CD4-positive, alpha-beta memory T cell (primary cell): ENCODE measurements at regions of chr17 and their contacts with region 1.

Region 1: GRCh38 chr17:68291844-68292695 is 775 bp downstream of the ARSG start:
- DNase-seq: peak; percentile 96 to 98 (median 97)
- H3K4me3 ChIP-seq: peak overlapping the region; percentile 18 to 90
- H3K4me3 Mint-ChIP-seq: peak overlapping the region; percentile 74 to 87 (median 84)
- H3K27ac ChIP-seq: peak overlapping the region; percentile 90
- H3K27ac Mint-ChIP-seq: peak overlapping the region; percentile 89 to 99 (median 93)
- H3K4me1 ChIP-seq: peaks cover 78% of the 10 kb centered on the region
- H3K4me1 Mint-ChIP-seq: peaks cover 53 to 84% (median 63%) of the 10 kb centered on the region in 4 donors
- H3K27me3 ChIP-seq: no peaks in the 10 kb centered on the region
- H3K27me3 Mint-ChIP-seq: no peaks in the 10 kb centered on the region

Region 2: DNA sequence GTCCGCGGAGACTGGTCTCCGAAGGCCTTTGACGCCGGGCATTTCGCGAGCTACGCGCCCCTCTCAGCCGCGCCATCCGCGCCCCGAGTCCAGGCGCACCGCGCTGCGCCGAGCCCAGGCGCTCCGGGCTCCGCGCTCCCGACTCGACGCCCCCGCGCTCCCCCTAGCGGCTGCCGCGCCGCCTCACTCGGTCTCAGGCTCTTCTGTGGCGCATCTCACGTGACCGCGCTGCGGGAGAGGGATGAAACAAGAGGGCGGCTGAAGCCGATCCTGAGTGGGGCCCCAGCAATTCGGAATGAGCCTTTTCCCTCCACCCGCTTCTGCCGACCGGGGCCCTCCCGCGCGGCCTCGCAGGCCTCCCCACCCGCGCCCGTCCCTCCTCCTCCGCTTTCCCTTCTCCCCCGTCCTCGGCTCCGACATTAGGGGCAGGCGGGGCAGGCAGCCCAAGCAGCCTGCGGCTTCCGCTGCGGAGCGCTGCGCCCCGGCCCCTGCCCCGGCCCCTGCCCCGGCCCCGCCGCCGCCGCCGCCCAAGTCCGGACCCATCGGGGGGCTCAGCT is 86.7 kb before region 1 on chr17:
- CTCF ChIA-PET with region 1: interaction called, 3 read pairs
- POLR2A ChIA-PET with region 1: interaction called, 25 read pairs
- intact Hi-C with region 1: no loop called
- DNase-seq: peak; percentile 88 to 94 (median 89)
- H3K4me3 ChIP-seq: peak overlapping the region in 1 of 2 donors; percentile 65
- H3K4me3 Mint-ChIP-seq: peak overlapping the region; percentile 79 to 93 (median 89)
- H3K27ac ChIP-seq: peak overlapping the region; percentile 72
- H3K27ac Mint-ChIP-seq: peak overlapping the region; percentile 74 to 94 (median 92)
- H3K4me1 ChIP-seq: peaks cover 43% of the 10 kb centered on the region
- H3K4me1 Mint-ChIP-seq: peaks cover 20 to 49% (median 33%) of the 10 kb centered on the region in 4 donors
- H3K27me3 ChIP-seq: no peaks in the 10 kb centered on the region
- H3K27me3 Mint-ChIP-seq: no peaks in the 10 kb centered on the region

Region 3: DNA sequence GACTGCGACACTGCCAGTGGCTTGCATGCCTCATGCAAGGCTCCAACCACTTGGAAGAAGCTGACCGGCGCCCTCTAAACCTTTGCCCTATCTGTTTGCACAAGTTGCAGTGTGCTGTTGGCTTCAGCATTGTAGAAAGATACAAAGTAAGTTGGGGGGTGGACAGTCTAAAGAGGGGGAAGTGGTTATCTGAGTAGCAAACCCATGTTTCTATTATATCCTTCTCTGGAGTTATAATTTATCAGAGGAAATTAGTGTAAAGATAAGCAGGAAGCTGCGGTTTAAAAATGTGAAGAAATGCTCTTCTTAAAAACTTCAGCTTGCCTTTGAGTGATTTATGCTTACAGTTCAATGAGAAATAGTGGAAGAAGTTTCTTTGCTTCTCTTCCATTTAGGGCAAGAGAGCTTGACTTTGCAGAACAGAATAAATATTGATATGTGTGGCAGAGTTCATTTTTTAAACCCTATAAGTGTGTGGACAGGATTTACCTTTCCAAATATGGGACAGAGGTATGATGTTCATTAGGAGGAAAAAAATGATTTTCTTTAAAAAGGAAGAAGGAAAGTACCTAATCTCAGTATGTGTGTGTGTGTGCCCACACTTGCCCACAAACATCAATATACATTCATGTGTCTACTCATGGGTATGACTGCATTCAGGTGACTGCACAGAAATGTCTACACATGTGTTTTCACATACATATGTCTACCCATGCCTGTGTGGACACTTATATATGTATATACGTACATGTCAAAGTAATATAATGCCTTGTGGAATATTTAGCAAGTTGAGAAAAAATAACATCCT is 36.1 kb before region 1 on chr17:
- CTCF ChIA-PET with region 1: interaction called, 3 read pairs
- POLR2A ChIA-PET with region 1: interaction called, 15 read pairs
- intact Hi-C with region 1: no loop called
- DNase-seq: peak; percentile 50 to 73 (median 60)
- H3K4me3 ChIP-seq: no peak overlapping the region
- H3K4me3 Mint-ChIP-seq: peak overlapping the region; percentile 46 to 73 (median 66)
- H3K27ac ChIP-seq: peak overlapping the region; percentile 88
- H3K27ac Mint-ChIP-seq: peak overlapping the region; percentile 81 to 99 (median 98)
- H3K4me1 ChIP-seq: peaks cover 86% of the 10 kb centered on the region
- H3K4me1 Mint-ChIP-seq: peaks cover 61 to 85% (median 72%) of the 10 kb centered on the region in 4 donors
- H3K27me3 ChIP-seq: no peaks in the 10 kb centered on the region
- H3K27me3 Mint-ChIP-seq: no peaks in the 10 kb centered on the region

Region 4: GRCh38 chr17:68310152-68310551 is 18.1 kb after region 1 on chr17:
- CTCF ChIA-PET with region 1: interaction called, 6 read pairs
- POLR2A ChIA-PET with region 1: interaction called, 43 read pairs
- intact Hi-C with region 1: no loop called
- DNase-seq: peak in 4 of 5 donors; percentile 14 to 69 (median 30)
- H3K4me3 ChIP-seq: no peak overlapping the region
- H3K4me3 Mint-ChIP-seq: peak overlapping the region in 3 of 8 donors; percentile 39 to 61 (median 43)
- H3K27ac ChIP-seq: no peak overlapping the region
- H3K27ac Mint-ChIP-seq: peak overlapping the region in 5 of 7 donors; percentile 30 to 76 (median 71)
- H3K4me1 ChIP-seq: peaks cover 59% of the 10 kb centered on the region
- H3K4me1 Mint-ChIP-seq: peaks cover 30 to 68% (median 55%) of the 10 kb centered on the region in 4 donors
- H3K27me3 ChIP-seq: no peaks in the 10 kb centered on the region
- H3K27me3 Mint-ChIP-seq: no peaks in the 10 kb centered on the region

Region 5: GRCh38 chr17:68346448-68346847 is 54.4 kb after region 1 on chr17:
- CTCF ChIA-PET with region 1: interaction called, 21 read pairs
- POLR2A ChIA-PET with region 1: interaction called, 151 read pairs
- intact Hi-C with region 1: loop called (anchors 1 kb)
- DNase-seq: peak; percentile 57 to 73 (median 63)
- H3K4me3 ChIP-seq: peak overlapping the region; percentile 1 to 36
- H3K4me3 Mint-ChIP-seq: peak overlapping the region; percentile 67 to 91 (median 82)
- H3K27ac ChIP-seq: peak overlapping the region; percentile 62
- H3K27ac Mint-ChIP-seq: peak overlapping the region; percentile 92 to 96 (median 93)
- H3K4me1 ChIP-seq: peaks cover 76% of the 10 kb centered on the region
- H3K4me1 Mint-ChIP-seq: peaks cover 53 to 82% (median 70%) of the 10 kb centered on the region in 4 donors
- H3K27me3 ChIP-seq: no peaks in the 10 kb centered on the region
- H3K27me3 Mint-ChIP-seq: no peaks in the 10 kb centered on the region

Region 6: DNA sequence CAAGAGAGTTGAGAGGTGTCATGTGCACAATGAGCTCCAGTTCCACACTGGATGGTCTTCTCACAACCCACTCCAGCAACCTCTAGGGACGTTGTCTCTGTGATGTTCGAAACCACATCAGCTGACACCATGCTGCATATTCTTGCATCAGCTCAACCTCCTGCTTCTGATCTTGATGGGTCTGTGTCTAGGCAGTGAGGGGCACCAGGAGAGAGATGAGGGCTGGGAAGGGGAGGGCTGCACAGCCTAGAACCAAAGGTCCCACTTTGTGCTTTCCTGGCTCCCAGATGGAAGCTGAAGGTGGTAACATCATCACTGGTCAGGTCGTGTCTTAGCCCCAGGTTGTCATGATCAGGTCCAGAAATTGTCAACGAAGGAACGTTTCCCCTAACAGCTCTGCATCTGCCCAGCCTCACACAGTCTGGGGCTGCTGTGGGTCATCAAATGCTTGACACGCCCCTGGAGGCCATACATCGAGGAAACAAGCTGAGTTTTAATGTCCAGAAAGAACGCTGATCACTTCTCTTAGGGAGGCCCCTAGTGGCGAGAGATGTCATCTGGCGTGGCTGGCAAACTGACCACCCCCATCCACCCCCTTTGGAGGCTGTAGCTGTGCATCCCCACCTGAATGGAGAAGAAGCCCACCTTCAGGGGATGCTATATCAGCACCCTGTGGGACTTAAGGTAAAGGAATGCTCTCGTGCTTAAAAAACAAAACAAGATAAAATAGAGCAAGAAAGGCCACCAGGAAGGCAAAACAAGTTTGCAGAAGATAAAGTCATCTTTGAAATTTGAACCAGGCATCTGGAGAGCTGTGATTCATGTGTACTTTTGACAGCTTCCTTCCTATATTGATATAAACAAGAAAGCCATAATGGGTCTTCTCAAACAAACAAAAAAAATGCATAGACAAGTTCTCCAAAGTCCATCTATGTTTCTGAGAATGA is 106.9 kb after region 1 on chr17:
- CTCF ChIA-PET with region 1: interaction called, 11 read pairs
- POLR2A ChIA-PET with region 1: interaction called, 26 read pairs
- intact Hi-C with region 1: loop called (anchors 2 kb)
- DNase-seq: no peak
- H3K4me3 ChIP-seq: no peak overlapping the region
- H3K4me3 Mint-ChIP-seq: peak overlapping the region in 5 of 8 donors; percentile 5 to 61 (median 40)
- H3K27ac ChIP-seq: no peak overlapping the region
- H3K27ac Mint-ChIP-seq: peak overlapping the region in 5 of 7 donors; percentile 46 to 79 (median 60)
- H3K4me1 ChIP-seq: peaks cover 38% of the 10 kb centered on the region
- H3K4me1 Mint-ChIP-seq: peaks cover 27 to 44% (median 34%) of the 10 kb centered on the region in 4 donors
- H3K27me3 ChIP-seq: no peaks in the 10 kb centered on the region
- H3K27me3 Mint-ChIP-seq: no peaks in the 10 kb centered on the region

Region 7: GRCh38 chr17:68512247-68512982 is 220.3 kb after region 1 on chr17 and contains the start of gene PRKAR1A:
- CTCF ChIA-PET with region 1: no interaction called
- POLR2A ChIA-PET with region 1: interaction called, 5 read pairs
- intact Hi-C with region 1: loop called (anchors 1 kb)
- DNase-seq: peak; percentile 93 to 97 (median 96)
- H3K4me3 ChIP-seq: peak within 1 kb of the TSS; percentile 95 to 96
- H3K4me3 Mint-ChIP-seq: peak within 1 kb of the TSS; percentile 97 to 100 (median 99)
- H3K27ac ChIP-seq: peak within 1 kb of the TSS; percentile 96
- H3K27ac Mint-ChIP-seq: peak within 1 kb of the TSS; percentile 96 to 100 (median 100)
- H3K4me1 ChIP-seq: peaks cover 30% of the 10 kb centered on the region
- H3K4me1 Mint-ChIP-seq: peaks cover 36 to 70% (median 43%) of the 10 kb centered on the region in 4 donors
- H3K27me3 ChIP-seq: no peaks in the 10 kb centered on the region
- H3K27me3 Mint-ChIP-seq: no peaks in the 10 kb centered on the region
- total RNA-seq, gene PRKAR1A: 182 to 183 TPM